H1 (cell line): ENCODE measurements at regions of chr11 and their contacts with region 1.

Region 1: GRCh38 chr11:66545701-66546367 is at the start of gene ZDHHC24:
- DNase-seq: peak; percentile 85 to 95
- H3K4me3 ChIP-seq: peak within 1 kb of the TSS; percentile 71 to 84 (median 79)
- H3K27ac ChIP-seq: no peak within 1 kb of the TSS
- H3K4me1 ChIP-seq: peaks cover 0 to 17% (median 11%) of the 10 kb centered on the region in 4 experiments; a peak in 6 of 7 replicates
- H3K27me3 ChIP-seq: no peaks in the 10 kb centered on the region
- CTCF ChIP-seq: no peak
- EP300 ChIP-seq: no peak
- POLR2A ChIP-seq: peak in 1 of 2 experiments; percentile 59; a peak in 1 of 3 replicates
- RAD21 ChIP-seq: no peak
- total RNA-seq, gene ZDHHC24: 7.0 and 8.4 TPM in 2 replicates

Region 2: GRCh38 chr11:66414120-66414934 is 131.5 kb before region 1 on chr11:
- CTCF ChIA-PET with region 1: no interaction called
- POLR2A ChIA-PET with region 1: no interaction called
- DNase-seq: peak in 1 of 2 experiments; percentile 29
- H3K4me3 ChIP-seq: peak overlapping the region in 3 of 4 experiments; percentile 18 to 45 (median 21); a peak in 4 of 8 replicates
- H3K27ac ChIP-seq: peak overlapping the region; percentile 81
- H3K4me1 ChIP-seq: peaks cover 11 to 40% (median 27%) of the 10 kb centered on the region in 4 experiments
- H3K27me3 ChIP-seq: peaks cover 2 to 11% (median 7%) of the 10 kb centered on the region in 4 experiments
- CTCF ChIP-seq: no peak
- EP300 ChIP-seq: no peak
- POLR2A ChIP-seq: peak in 1 of 2 experiments; percentile 81; a peak in 2 of 3 replicates
- RAD21 ChIP-seq: no peak

Region 3: GRCh38 chr11:66454249-66454648 is 91.6 kb before region 1 on chr11:
- CTCF ChIA-PET with region 1: no interaction called
- POLR2A ChIA-PET with region 1: no interaction called
- DNase-seq: no peak
- H3K4me3 ChIP-seq: no peak overlapping the region
- H3K27ac ChIP-seq: no peak overlapping the region
- H3K4me1 ChIP-seq: no peaks in the 10 kb centered on the region
- H3K27me3 ChIP-seq: no peaks in the 10 kb centered on the region; a peak in 1 of 7 replicates
- CTCF ChIP-seq: no peak
- EP300 ChIP-seq: no peak
- POLR2A ChIP-seq: no peak
- RAD21 ChIP-seq: no peak

Region 4: DNA sequence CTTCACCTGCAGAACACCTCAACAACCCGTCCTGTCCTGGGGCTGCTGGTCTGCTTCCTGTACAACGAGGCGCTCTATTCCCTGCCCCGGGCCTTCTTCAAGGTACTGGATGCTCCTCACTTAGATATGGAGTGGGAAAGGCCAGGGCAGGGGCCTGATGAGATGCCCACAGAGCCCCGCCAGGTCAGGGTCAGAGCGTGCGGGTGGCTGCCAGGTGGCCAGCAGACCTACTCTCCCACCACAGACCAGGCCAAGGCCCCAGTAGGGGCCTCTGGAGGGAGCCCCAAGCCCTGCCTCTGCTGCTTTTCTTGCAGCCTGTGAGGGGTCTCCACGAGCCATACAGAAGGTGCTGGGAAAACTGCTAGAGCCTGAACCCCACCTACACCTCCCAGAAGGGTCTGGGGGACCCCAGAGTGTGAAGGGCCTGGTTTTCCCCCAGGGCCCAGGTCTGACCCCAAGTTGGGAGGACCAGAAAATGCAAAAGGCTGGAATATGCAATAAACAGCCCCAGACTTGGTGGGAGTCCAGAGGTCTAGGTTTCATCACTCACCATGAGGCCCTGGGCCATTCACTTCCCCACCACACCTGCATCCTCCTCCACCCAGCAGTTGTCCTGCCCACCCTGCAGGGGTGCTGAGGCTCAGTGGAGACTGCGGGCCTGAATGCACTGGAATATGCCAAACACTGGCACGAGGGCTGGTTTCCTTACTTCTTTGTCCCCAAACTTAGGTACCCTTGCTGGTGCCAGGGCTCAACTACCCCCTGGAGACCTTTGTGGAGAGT is 14.7 kb before region 1 on chr11:
- CTCF ChIA-PET with region 1: interaction called, 4 read pairs
- POLR2A ChIA-PET with region 1: interaction called, 30 read pairs
- DNase-seq: no peak
- H3K4me3 ChIP-seq: no peak overlapping the region
- H3K27ac ChIP-seq: no peak overlapping the region
- H3K4me1 ChIP-seq: peaks cover 0 to 2% (median 0%) of the 10 kb centered on the region in 4 experiments; a peak in 1 of 7 replicates
- H3K27me3 ChIP-seq: no peaks in the 10 kb centered on the region
- CTCF ChIP-seq: no peak
- EP300 ChIP-seq: no peak
- POLR2A ChIP-seq: no peak
- RAD21 ChIP-seq: no peak; a peak in 1 of 4 replicates

Region 5: GRCh38 chr11:66559142-66559865 is 13.5 kb after region 1 on chr11:
- CTCF ChIA-PET with region 1: interaction called, 6 read pairs
- POLR2A ChIA-PET with region 1: interaction called, 54 read pairs
- DNase-seq: no peak
- H3K4me3 ChIP-seq: no peak overlapping the region
- H3K27ac ChIP-seq: no peak overlapping the region
- H3K4me1 ChIP-seq: peaks cover 0 to 2% (median 0%) of the 10 kb centered on the region in 4 experiments; a peak in 1 of 7 replicates
- H3K27me3 ChIP-seq: no peaks in the 10 kb centered on the region
- CTCF ChIP-seq: no peak
- EP300 ChIP-seq: no peak
- POLR2A ChIP-seq: no peak
- RAD21 ChIP-seq: no peak

Region 6: DNA sequence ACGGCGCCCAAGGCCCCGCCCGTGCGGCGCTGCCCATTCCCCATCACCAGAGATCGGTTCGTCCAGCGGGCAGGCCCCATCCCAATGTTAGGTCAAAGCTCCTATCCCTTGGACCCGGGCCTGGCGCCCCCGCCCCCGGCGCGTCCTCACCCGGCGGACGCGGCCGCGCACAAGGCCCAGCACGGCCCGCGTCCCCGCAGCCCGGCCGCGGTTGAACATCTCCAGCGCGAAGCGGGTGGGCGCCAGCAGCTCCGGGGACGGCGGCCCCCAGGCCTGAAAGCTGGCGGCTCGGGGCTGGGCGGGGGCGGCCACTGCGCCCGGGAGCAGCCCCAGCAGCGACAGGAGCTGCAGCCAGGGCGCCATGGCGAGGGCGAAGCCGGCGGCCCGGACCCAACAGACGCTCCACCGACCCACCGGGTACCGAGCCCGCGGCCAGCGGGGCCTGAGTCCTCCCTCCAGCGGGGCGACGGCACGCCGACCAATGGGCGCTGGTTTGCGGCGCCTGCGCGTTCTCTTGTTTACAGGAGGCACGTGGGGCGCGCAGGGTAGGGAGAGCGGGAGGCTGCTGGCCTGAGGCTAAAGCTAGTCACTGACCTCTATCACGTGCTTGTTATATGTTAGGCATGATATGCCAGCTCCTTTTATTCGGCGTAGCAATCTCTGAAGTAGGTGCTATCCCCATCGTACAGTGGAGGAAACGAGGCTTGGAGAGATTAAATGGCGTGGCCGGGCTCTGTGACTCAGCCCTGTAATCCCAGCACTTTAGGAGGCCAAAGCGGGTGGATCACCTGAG is 22.5 kb after region 1 on chr11 and contains the start of gene CTSF:
- CTCF ChIA-PET with region 1: interaction called, 4 read pairs
- POLR2A ChIA-PET with region 1: interaction called, 54 read pairs
- DNase-seq: no peak
- H3K4me3 ChIP-seq: no peak within 1 kb of the TSS; a peak in 1 of 8 replicates
- H3K27ac ChIP-seq: no peak within 1 kb of the TSS; the same call in 1 of the 2 replicates
- H3K4me1 ChIP-seq: peaks cover 11 to 20% (median 14%) of the 10 kb centered on the region in 4 experiments; a peak in 6 of 7 replicates
- H3K27me3 ChIP-seq: no peaks in the 10 kb centered on the region
- CTCF ChIP-seq: no peak
- EP300 ChIP-seq: no peak
- POLR2A ChIP-seq: no peak
- RAD21 ChIP-seq: no peak
- total RNA-seq, gene CTSF: 0.36 and 0.58 TPM in 2 replicates

Region 7: GRCh38 chr11:66616379-66617154 is 70.7 kb after region 1 on chr11 and contains the start of gene RBM14:
- CTCF ChIA-PET with region 1: no interaction called
- POLR2A ChIA-PET with region 1: interaction called, 12 read pairs
- DNase-seq: peak; percentile 96 to 99
- H3K4me3 ChIP-seq: peak within 1 kb of the TSS; percentile 81 to 99 (median 92)
- H3K27ac ChIP-seq: peak within 1 kb of the TSS; percentile 98
- H3K4me1 ChIP-seq: peaks cover 0 to 15% (median 3%) of the 10 kb centered on the region in 4 experiments; a peak in 4 of 7 replicates
- H3K27me3 ChIP-seq: no peaks in the 10 kb centered on the region
- CTCF ChIP-seq: no peak
- EP300 ChIP-seq: no peak
- POLR2A ChIP-seq: peak; percentile 92 to 98
- RAD21 ChIP-seq: no peak
- total RNA-seq, gene RBM14: 142 and 145 TPM in 2 replicates

Region 8: GRCh38 chr11:66638177-66639065 is 92.6 kb after region 1 on chr11 and contains the start of gene RBM4:
- CTCF ChIA-PET with region 1: interaction called, 3 read pairs
- POLR2A ChIA-PET with region 1: interaction called, 33 read pairs
- DNase-seq: peak; percentile 94 to 99
- H3K4me3 ChIP-seq: peak within 1 kb of the TSS; percentile 84 to 98 (median 94)
- H3K27ac ChIP-seq: peak within 1 kb of the TSS; percentile 99
- H3K4me1 ChIP-seq: peaks cover 0 to 20% (median 14%) of the 10 kb centered on the region in 4 experiments; a peak in 5 of 7 replicates
- H3K27me3 ChIP-seq: no peaks in the 10 kb centered on the region
- CTCF ChIP-seq: no peak
- EP300 ChIP-seq: 0 out of 3 replicates have a peak, but pooled peaks of 1 of the 2 experiments have one; percentile 21
- POLR2A ChIP-seq: peak; percentile 95 to 99
- RAD21 ChIP-seq: 0 out of 4 replicates have a peak, but pooled peaks of 1 of the 2 experiments have one; percentile 4
- total RNA-seq, gene RBM4: 192 and 201 TPM in 2 replicates